GM18951 (cell line): ENCODE measurements at regions of chr1 and their contacts with region 1.

Region 1: GRCh38 chr1:145978854-145979759 is 14.6 kb downstream of the POLR3GL start:
- POLR2A ChIP-seq: no peak

Region 2: GRCh38 chr1:145757420-145757819 is 221.7 kb before region 1 on chr1:
- in situ Hi-C with region 1: no loop called
- POLR2A ChIP-seq: no peak

Region 3: DNA sequence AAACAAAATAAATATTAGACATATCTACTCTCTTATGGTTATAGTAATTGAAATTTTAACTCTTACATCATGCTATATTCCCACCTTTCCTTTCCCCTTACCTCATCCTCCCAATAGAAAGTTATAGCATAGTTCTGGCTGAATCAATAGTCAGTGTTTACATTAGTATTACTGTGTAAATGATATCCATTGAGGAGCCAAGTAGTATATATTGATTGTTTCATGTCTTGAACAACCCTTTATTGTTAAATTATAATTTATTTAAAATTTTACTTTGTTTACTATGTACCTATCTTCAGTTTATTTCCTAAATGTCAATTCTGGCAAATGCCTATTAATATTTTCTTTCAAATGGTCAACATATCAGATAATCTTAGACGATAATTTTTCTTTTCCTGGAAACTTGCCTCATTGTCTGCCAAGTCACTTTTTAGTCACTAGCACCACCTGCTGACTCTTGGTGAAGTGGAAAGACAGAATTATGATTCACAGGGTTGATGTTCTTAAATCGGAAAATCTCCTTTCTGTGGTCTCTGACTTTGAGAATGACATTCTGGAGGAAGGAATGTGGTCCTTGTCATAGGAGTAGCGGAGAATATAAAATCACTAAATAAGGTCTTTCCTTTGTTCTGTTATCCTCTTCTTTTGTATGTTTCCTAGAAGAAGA is 33.8 kb after region 1 on chr1:
- in situ Hi-C with region 1: loop called (anchors 5 kb)
- POLR2A ChIP-seq: no peak